ENCODE measurements at regions of chr21 and their contacts with region 1.

Region 1: GRCh38 chr21:31173881-31174555 is 135.7 kb upstream of the KRTAP19-8 start:
- DNase-seq: peak; percentile 77
- H3K4me3 Mint-ChIP-seq: peak overlapping the region; percentile 75
- H3K27ac Mint-ChIP-seq: peak overlapping the region; percentile 82
- H3K4me1 Mint-ChIP-seq: peaks cover 88% of the 10 kb centered on the region
- H3K27me3 Mint-ChIP-seq: no peaks in the 10 kb centered on the region

Region 2: DNA sequence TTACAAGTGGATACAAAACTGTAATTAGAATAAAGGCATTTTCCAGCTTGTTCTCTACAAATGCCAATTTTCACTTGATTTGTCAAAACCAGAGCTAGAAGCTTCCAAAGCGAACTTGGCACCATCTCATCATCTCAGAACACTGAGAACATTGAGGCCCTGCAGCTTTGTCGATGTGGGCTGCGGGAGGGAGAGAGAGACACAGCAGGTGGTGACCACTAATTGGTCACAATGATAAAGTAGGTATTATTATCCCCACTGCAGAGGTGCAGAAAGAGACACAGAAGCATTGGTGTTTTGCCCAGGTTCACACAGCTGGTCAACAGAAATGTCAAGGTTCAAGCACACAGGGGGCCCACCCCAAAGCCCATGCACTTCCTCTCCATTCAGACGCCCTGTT is 63.6 kb before region 1 on chr21:
- CTCF ChIA-PET with region 1: no interaction called
- intact Hi-C with region 1: no loop called
- DNase-seq: no peak
- H3K4me3 Mint-ChIP-seq: no peak overlapping the region
- H3K27ac Mint-ChIP-seq: no peak overlapping the region
- H3K4me1 Mint-ChIP-seq: peaks cover 7% of the 10 kb centered on the region
- H3K27me3 Mint-ChIP-seq: no peaks in the 10 kb centered on the region

Region 3: GRCh38 chr21:31161157-31161556 is 12.9 kb before region 1 on chr21:
- CTCF ChIA-PET with region 1: interaction called, 5 read pairs
- intact Hi-C with region 1: loop called (anchors 1 kb)
- DNase-seq: peak; percentile 60
- H3K4me3 Mint-ChIP-seq: no peak overlapping the region
- H3K27ac Mint-ChIP-seq: peak overlapping the region; percentile 89
- H3K4me1 Mint-ChIP-seq: peaks cover 88% of the 10 kb centered on the region
- H3K27me3 Mint-ChIP-seq: no peaks in the 10 kb centered on the region

Region 4: DNA sequence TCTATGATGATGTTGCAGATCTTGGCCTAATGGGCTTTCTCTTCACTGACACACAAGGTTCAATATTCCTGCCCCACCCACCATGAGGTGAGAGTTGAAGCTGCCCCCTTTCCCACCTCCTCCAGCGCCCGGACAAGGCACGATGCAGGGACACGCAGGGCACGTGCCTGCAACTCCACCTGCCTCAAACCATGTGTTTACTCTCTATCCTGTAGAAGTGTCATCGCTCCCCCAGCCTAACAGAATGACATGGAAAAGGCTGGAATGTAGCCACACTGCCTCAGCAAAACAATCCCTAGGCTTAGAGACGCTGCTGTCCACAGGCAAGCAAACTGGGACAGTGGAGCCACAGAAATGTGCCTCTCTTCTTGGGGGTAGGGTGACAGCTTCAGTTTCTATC is 392.6 kb after region 1 on chr21:
- CTCF ChIA-PET with region 1: no interaction called
- intact Hi-C with region 1: no loop called
- DNase-seq: no peak
- H3K4me3 Mint-ChIP-seq: no peak overlapping the region
- H3K27ac Mint-ChIP-seq: no peak overlapping the region
- H3K4me1 Mint-ChIP-seq: no peaks in the 10 kb centered on the region
- H3K27me3 Mint-ChIP-seq: no peaks in the 10 kb centered on the region

Measured in activated naive CD4-positive, alpha-beta T cell treated with anti-CD3 and anti-CD28 coated beads for 36 hours (primary cell).